ENCODE measurements at regions of chr2 and their contacts with region 1.

Region 1: DNA sequence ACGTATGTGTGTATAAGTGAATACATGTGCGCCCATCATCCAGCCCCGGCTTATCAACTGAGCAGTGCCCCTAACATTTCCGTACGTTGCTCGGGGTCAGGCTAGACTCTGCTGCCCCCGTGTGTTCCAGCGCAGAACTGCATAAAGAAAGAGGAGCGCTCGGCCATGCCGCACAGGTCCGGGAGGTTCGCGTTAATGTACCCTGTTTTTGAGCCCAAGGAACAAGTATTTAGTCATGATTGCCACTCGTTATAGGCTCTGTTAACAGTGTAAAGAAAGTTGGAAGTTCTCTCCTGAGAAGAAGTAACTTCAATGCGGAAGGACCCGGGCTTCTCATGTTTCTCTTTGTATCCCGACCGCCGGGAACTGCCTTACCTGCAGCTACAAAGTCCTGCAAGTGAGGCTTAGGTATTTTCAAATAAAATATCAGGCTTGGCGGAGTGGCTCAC is 55.7 kb downstream of the CD8B2 start:
- DNase-seq: peak; percentile 69
- H3K4me3 ChIP-seq: peak overlapping the region; percentile 27
- H3K27ac ChIP-seq: no peak overlapping the region
- H3K4me1 ChIP-seq: peaks cover 15% of the 10 kb centered on the region
- H3K27me3 ChIP-seq: peaks cover 12% of the 10 kb centered on the region
- CTCF ChIP-seq: peak; percentile 83

Region 2: GRCh38 chr2:106104332-106105062 is 438.3 kb before region 1 on chr2:
- CTCF ChIA-PET with region 1: interaction called, 3 read pairs
- POLR2A ChIA-PET with region 1: interaction called, 3 read pairs
- intact Hi-C with region 1: loop called (anchors 2 kb)
- DNase-seq: peak; percentile 70
- H3K4me3 ChIP-seq: no peak overlapping the region
- H3K27ac ChIP-seq: no peak overlapping the region
- H3K4me1 ChIP-seq: no peaks in the 10 kb centered on the region
- H3K27me3 ChIP-seq: no peaks in the 10 kb centered on the region
- CTCF ChIP-seq: peak; percentile 93

Region 3: DNA sequence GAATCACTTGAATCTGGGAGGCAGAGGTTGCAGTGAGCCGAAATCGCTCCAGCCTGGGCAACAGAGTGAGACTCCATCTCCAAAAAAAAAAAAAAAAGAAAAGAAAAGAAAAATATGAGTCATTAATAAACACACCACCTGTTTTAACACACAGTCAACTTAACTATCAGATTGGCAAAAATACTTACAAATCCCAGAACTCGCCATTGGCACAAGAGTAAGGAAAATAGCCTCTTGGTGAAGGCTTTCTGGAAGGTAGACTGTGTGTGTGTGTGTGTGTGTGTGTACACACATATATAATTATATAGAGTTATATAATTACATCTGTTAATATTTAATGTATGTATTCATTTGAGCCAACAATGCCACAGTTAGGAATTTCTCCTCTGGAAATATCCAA is 285.0 kb before region 1 on chr2:
- CTCF ChIA-PET with region 1: no interaction called
- POLR2A ChIA-PET with region 1: no interaction called
- intact Hi-C with region 1: loop called (anchors 10 kb)
- DNase-seq: no peak
- H3K4me3 ChIP-seq: no peak overlapping the region
- H3K27ac ChIP-seq: no peak overlapping the region
- H3K4me1 ChIP-seq: no peaks in the 10 kb centered on the region
- H3K27me3 ChIP-seq: no peaks in the 10 kb centered on the region
- CTCF ChIP-seq: no peak

Region 4: DNA sequence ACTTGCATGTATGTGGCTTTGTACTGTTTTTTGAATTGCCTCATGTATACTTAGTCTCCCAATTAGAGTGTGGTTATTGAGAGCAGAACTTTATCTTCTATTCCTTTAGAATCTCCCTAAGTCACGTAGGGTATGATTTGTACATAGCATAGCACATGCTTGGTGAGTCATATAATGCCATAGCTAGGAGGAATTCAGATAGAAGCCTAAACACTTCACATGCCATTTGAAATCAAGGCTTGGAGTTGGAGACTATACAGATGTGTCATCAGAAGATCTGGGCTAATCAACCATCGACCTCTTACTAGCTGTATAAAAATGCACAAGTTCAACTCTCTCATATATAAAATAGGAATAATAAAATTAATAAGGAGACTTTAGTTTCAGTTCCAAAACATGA is 565.7 kb after region 1 on chr2:
- CTCF ChIA-PET with region 1: no interaction called
- POLR2A ChIA-PET with region 1: no interaction called
- intact Hi-C with region 1: no loop called
- DNase-seq: no peak
- H3K4me3 ChIP-seq: no peak overlapping the region
- H3K27ac ChIP-seq: no peak overlapping the region
- H3K4me1 ChIP-seq: no peaks in the 10 kb centered on the region
- H3K27me3 ChIP-seq: no peaks in the 10 kb centered on the region
- CTCF ChIP-seq: no peak